Activated CD4-positive, alpha-beta memory T cell treated with anti-CD3 and anti-CD28 coated beads for 36 hours (primary cell): ENCODE measurements at regions of chr11 and their contacts with region 1.

Region 1: DNA sequence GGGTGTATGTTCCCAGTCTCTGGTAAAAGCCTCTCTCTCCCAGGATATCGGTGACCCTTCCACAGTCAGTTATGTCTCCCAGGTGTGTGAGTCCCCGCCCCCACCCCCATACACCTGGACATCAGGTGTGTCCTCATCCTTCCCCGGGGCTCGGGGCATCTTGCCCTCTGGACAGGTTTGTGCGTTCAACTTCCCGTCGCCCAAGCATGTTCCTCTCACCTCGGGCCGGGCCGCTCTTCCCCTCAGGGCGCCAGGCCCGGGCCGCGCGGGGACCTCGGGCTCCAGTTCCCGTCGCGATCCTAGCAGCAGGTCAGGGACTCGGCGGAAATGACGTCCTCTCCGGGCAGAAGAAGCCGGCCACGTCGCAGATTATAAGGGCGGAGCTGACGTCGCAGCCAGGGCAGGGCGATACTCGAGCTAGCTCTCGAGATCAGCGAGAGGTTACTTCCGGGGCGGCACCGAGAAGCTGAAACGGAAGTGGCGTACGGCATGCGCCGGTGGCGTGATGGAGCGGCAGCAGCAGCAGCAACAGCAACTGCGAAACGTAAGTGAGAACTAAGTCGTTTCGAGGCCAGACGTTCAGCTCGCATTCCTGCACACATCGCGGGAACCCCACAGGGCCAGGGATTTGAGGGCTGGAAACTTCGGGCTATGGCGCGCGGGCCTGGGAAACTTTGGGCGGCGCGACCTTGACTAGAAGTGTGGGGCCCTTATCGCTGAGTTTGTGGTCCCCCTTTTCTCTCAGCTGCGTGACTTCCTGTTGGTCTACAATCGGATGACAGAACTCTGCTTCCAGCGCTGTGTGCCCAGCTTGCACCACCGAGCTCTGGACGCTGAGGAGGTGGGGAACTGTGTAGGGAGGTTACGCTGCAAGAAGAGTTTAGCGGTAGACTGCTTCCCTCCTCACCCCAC is at the starts of genes ARFIP2 and TIMM10B:
- DNase-seq: peak; percentile 99
- H3K4me3 Mint-ChIP-seq: peak within 1 kb of the TSS; percentile 91
- H3K27ac Mint-ChIP-seq: peak within 1 kb of the TSS; percentile 96
- H3K4me1 Mint-ChIP-seq: peaks cover 35% of the 10 kb centered on the region
- H3K27me3 Mint-ChIP-seq: no peaks in the 10 kb centered on the region
- total RNA-seq, gene ARFIP2: 35.1 to 37.8 TPM
- total RNA-seq, gene TIMM10B: 40.2 to 41.3 TPM

Region 2: DNA sequence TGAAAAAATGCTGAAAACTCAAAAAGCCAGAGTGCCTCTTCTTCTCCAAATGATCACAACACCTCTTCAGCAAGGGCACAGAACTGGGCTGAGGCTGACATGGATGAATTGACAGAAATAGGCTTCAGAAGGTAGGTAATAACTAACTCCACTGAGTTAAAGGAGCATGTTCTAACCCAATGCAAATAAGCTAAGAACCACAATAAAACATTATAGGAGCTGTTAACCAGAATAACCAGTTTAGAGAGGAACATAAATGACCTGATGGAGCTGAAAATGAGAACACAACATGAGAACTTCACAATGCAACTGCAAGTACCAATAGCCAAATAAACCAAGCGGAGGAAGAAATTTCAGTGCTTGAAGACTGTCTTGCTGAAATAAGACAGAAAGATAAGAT is 364.6 kb before region 1 on chr11:
- CTCF ChIA-PET with region 1: no interaction called
- POLR2A ChIA-PET with region 1: no interaction called
- intact Hi-C with region 1: no loop called
- DNase-seq: no peak
- H3K4me3 Mint-ChIP-seq: no peak overlapping the region
- H3K27ac Mint-ChIP-seq: no peak overlapping the region
- H3K4me1 Mint-ChIP-seq: no peaks in the 10 kb centered on the region
- H3K27me3 Mint-ChIP-seq: peaks cover 8% of the 10 kb centered on the region

Region 3: DNA sequence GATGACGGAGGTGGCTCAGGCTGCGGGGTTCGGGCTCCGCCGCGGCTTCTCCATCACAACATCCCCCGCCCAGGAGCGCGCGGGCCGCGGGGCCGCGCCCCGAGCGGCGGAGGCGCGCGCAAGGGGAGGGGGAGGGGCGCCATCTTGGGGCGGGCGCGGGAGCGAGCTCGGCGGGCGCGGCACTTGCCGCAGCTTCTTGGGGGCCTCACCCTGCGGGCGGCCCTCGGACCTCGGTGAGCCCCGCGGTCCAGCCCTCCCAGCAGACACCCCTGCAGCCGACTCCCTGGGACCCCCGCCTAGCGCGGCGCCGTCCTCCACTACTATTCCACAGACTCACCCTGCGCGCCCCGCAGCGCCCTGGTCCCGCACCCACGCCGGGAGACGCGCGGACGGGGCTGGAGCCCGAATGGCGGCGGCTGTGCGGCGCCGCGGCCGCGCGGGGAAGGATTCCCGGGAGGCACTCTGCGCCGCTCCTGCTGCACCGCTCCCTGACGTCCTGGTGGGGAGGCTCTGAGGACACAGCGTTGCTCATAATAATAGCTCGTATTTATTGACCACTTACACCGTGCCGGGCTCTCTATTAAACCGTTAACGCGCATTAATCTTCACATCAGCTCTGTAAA is 62.1 kb before region 1 on chr11 and contains the start of gene APBB1:
- CTCF ChIA-PET with region 1: no interaction called
- POLR2A ChIA-PET with region 1: interaction called, 6 read pairs
- intact Hi-C with region 1: loop called (anchors 2 kb)
- DNase-seq: peak; percentile 78
- H3K4me3 Mint-ChIP-seq: peak within 1 kb of the TSS; percentile 73
- H3K27ac Mint-ChIP-seq: peak within 1 kb of the TSS; percentile 61
- H3K4me1 Mint-ChIP-seq: peaks cover 8% of the 10 kb centered on the region
- H3K27me3 Mint-ChIP-seq: peaks cover 5% of the 10 kb centered on the region
- total RNA-seq, gene APBB1: 51.6 to 55.3 TPM

Region 4: GRCh38 chr11:6505577-6506240 is 24.4 kb after region 1 on chr11:
- CTCF ChIA-PET with region 1: interaction called, 21 read pairs
- POLR2A ChIA-PET with region 1: interaction called, 4 read pairs
- intact Hi-C with region 1: no loop called
- DNase-seq: no peak
- H3K4me3 Mint-ChIP-seq: no peak overlapping the region
- H3K27ac Mint-ChIP-seq: no peak overlapping the region
- H3K4me1 Mint-ChIP-seq: peaks cover 1% of the 10 kb centered on the region
- H3K27me3 Mint-ChIP-seq: no peaks in the 10 kb centered on the region

Region 5: DNA sequence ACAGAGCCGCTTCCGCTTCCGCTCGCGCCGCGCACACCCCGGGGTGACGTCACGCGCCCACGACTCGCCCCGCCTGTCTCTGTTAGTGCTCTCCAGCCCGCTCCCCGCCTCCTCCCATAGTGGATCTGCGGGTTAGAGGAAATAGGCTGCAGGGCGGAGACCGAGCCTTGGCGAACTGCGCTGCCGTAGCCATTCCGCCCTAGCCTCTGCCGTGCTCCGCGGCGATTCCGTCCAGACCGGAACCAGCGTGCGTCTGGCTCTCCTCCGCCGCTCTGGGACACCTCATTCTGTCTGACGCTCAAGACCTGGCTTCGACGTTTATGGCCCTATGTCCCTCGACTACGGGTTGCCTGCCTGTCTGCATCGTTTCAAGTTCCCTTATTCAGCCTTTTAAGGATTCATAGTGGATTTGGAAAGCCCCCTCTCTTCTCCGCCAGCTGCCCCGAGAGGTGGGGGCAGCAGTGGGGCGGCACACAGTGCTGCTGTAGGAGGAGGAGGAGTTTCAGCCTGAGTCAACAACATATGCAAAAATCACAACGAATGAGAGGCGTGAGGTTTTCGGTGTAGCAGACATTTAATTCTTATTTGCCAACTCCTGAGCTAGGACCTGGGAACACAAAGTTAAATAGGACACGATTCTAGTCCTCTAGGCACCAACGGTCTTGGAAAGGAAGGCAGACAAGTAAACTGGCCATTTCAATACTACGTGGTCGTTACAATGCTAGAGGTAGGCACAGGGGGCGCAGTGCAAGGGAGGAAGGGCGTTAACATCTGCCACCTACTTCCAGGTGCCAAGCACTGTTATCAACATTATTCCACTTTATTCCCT is 131.2 kb after region 1 on chr11 and contains the start of gene TAF10:
- CTCF ChIA-PET with region 1: interaction called, 3 read pairs
- POLR2A ChIA-PET with region 1: interaction called, 4 read pairs
- intact Hi-C with region 1: loop called (anchors 2 kb)
- DNase-seq: peak; percentile 96
- H3K4me3 Mint-ChIP-seq: peak within 1 kb of the TSS; percentile 86
- H3K27ac Mint-ChIP-seq: peak within 1 kb of the TSS; percentile 92
- H3K4me1 Mint-ChIP-seq: peaks cover 10% of the 10 kb centered on the region
- H3K27me3 Mint-ChIP-seq: no peaks in the 10 kb centered on the region
- total RNA-seq, gene TAF10: 158 to 165 TPM

Region 6: GRCh38 chr11:6746086-6746618 is 264.9 kb after region 1 on chr11:
- CTCF ChIA-PET with region 1: no interaction called
- POLR2A ChIA-PET with region 1: interaction called, 4 read pairs
- intact Hi-C with region 1: loop called (anchors 5 kb)
- DNase-seq: peak; percentile 52
- H3K4me3 Mint-ChIP-seq: no peak overlapping the region
- H3K27ac Mint-ChIP-seq: no peak overlapping the region
- H3K4me1 Mint-ChIP-seq: peaks cover 32% of the 10 kb centered on the region
- H3K27me3 Mint-ChIP-seq: no peaks in the 10 kb centered on the region